ENCODE measurements at regions of chr1 and their contacts with region 1.

Region 1: GRCh38 chr1:34460193-34460592 is 283.5 kb downstream of the C1orf94 start:
- DNase-seq: peak; percentile 67
- CTCF ChIP-seq: peak; percentile 66

Region 2: DNA sequence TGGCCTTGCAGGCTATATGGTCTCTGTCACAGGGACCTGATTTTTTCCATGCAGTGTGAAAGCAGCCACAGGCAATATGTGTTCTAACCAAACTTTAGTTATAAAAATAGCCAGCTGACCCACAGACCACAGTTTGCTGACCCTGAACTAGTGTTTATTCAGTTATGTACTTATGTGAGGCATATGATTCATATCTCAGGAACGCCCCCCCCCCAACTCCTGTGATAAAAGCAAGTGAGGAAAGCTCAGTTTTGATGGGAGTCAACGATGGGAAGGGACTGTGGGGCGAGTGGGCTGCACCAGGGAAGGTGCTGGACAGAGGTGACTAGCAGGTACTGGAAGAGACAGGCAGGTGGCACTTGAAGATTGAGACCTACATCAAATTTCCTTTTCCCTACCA is 516.2 kb before region 1 on chr1:
- CTCF ChIA-PET with region 1: no interaction called
- POLR2A ChIA-PET with region 1: no interaction called
- DNase-seq: no peak
- CTCF ChIP-seq: no peak

Region 3: GRCh38 chr1:34444516-34444915 is 15.7 kb before region 1 on chr1:
- CTCF ChIA-PET with region 1: interaction called, 16 read pairs
- POLR2A ChIA-PET with region 1: no interaction called
- DNase-seq: no peak
- CTCF ChIP-seq: no peak

Region 4: GRCh38 chr1:34470401-34470800 is 10.2 kb after region 1 on chr1:
- CTCF ChIA-PET with region 1: interaction called, 24 read pairs
- POLR2A ChIA-PET with region 1: no interaction called
- DNase-seq: no peak
- CTCF ChIP-seq: no peak

Region 5: GRCh38 chr1:34479731-34480130 is 19.5 kb after region 1 on chr1:
- CTCF ChIA-PET with region 1: interaction called, 18 read pairs
- POLR2A ChIA-PET with region 1: no interaction called
- DNase-seq: no peak
- CTCF ChIP-seq: no peak

Region 6: GRCh38 chr1:34597877-34598514 is 137.8 kb after region 1 on chr1:
- CTCF ChIA-PET with region 1: interaction called, 211 read pairs
- POLR2A ChIA-PET with region 1: no interaction called
- DNase-seq: peak; percentile 79
- CTCF ChIP-seq: peak; percentile 91

Region 7: GRCh38 chr1:34603594-34603993 is 143.4 kb after region 1 on chr1:
- CTCF ChIA-PET with region 1: interaction called, 211 read pairs
- POLR2A ChIA-PET with region 1: no interaction called
- DNase-seq: no peak
- CTCF ChIP-seq: no peak

Region 8: DNA sequence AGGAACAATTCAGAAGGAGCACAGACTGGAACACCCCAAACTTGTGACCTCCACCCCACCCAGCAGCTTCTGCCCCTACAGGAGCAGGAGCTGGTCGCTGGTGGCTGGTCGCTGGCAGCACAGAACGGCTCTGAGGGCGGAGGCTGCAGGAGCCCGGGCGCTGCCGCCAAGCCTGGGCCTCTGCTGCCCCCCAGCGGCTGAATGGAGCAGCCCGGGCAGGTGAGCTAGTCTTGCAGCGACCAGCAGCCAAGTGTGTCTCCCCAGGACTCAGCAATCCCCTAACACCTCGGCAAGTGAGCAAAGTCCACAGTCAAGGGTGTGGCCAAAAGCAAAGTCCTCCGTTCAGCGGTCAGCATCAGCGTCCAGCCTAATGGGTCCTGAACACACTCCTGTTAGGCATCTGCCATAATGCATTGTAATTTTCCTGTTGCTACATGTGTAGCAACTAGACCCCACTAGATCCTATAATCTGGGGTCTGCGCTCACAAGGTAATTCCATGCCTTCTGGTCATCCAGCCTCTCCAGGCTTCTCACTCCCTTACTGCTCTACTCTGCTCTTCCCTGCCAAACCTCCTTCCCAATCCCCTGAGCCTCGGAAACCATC is 282.6 kb after region 1 on chr1:
- CTCF ChIA-PET with region 1: interaction called, 25 read pairs
- POLR2A ChIA-PET with region 1: no interaction called
- DNase-seq: peak; percentile 90
- CTCF ChIP-seq: peak; percentile 97